ENCODE measurements at regions of chr18 and their contacts with region 1.

Region 1: DNA sequence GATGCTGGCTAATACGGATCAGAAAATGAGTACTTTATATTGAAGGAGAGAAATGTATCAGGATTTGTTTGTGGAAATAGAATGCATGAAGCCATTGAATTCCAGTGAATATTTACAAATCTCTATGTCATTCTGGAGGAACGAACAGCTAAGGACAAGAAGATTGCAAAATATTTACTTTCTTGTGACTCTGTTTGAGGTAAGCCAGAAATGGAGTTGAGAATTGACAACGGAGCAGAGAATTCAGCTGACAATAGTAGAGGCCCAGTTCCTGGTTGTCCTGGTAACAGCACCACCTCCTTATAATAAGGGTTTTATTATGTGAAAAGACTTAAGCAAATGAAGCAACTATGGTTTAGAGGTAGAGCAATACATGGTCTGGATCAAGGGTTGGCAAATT is 349.2 kb downstream of the ADCYAP1 start:
- DNase-seq: no peak
- ATAC-seq: no peak
- H3K4me3 ChIP-seq: no peak overlapping the region
- H3K27ac ChIP-seq: no peak overlapping the region
- H3K4me1 ChIP-seq: no peaks in the 10 kb centered on the region
- H3K27me3 ChIP-seq: no peaks in the 10 kb centered on the region
- CTCF ChIP-seq: no peak
- EP300 ChIP-seq: no peak
- POLR2A ChIP-seq: no peak
- RAD21 ChIP-seq: no peak

Region 2: DNA sequence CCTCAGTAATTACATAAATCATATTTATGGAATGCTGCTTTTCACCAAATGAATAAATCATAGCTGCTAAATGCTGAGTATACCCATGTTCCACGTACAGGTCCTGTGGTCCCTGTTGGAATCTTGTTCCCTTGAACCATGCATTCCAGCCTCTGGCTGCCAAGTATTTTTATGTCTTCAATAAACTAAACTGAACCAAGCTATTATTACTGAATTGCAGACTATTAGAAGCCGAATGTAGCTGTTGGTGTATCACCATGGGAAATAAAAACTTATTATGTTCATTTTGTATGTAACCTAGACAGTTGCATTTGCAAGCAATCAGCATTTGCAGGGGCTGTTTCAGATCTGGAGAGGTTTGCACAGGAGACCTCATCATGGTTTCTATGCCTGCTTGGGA is 13.2 kb after region 1 on chr18:
- CTCF ChIA-PET with region 1: no interaction called
- POLR2A ChIA-PET with region 1: interaction called, 10 read pairs
- in situ Hi-C with region 1: no loop called
- intact Hi-C with region 1: no loop called
- DNase-seq: no peak
- ATAC-seq: no peak
- H3K4me3 ChIP-seq: no peak overlapping the region
- H3K27ac ChIP-seq: no peak overlapping the region
- H3K4me1 ChIP-seq: no peaks in the 10 kb centered on the region
- H3K27me3 ChIP-seq: no peaks in the 10 kb centered on the region
- CTCF ChIP-seq: no peak
- EP300 ChIP-seq: no peak
- POLR2A ChIP-seq: no peak
- RAD21 ChIP-seq: no peak

Region 3: GRCh38 chr18:1308686-1309085 is 54.9 kb after region 1 on chr18:
- CTCF ChIA-PET with region 1: no interaction called
- POLR2A ChIA-PET with region 1: no interaction called
- in situ Hi-C with region 1: no loop called
- intact Hi-C with region 1: no loop called
- DNase-seq: no peak
- ATAC-seq: no peak
- H3K4me3 ChIP-seq: no peak overlapping the region
- H3K27ac ChIP-seq: no peak overlapping the region
- H3K4me1 ChIP-seq: no peaks in the 10 kb centered on the region; a peak in 1 of 5 replicates
- H3K27me3 ChIP-seq: no peaks in the 10 kb centered on the region
- CTCF ChIP-seq: no peak
- EP300 ChIP-seq: no peak
- POLR2A ChIP-seq: no peak
- RAD21 ChIP-seq: no peak

Measured in K562 (cell line).